GM10248 (cell line): ENCODE measurements at regions of chr12 and their contacts with region 1.

Region 1: GRCh38 chr12:101839324-101840283 is 8.8 kb upstream of the GNPTAB start:
- DNase-seq: peak; percentile 56
- CTCF ChIP-seq: peak; percentile 78

Region 2: DNA sequence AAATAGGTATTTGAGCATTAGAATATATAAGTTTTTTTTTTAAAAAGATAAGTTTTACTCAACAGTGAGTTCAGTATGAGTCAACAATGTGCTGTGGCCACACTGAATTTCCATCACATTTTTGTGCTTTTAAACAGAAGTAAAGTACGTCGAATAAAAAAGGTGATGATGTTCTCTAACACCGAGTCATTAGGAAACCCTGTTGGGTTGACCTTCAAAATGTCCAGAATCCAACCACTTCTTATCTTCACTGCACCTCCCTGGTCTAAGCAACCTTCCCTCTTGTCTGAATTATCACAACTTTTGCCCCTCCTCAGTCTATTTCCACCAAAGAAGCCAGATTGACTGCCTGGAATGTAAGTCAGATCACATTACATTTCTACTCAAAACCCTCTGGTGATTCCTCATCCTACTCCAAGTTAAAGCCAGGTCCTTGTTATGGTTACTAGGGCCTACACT is 57.3 kb before region 1 on chr12:
- CTCF ChIA-PET with region 1: interaction called, 28 read pairs
- POLR2A ChIA-PET with region 1: no interaction called
- DNase-seq: no peak
- CTCF ChIP-seq: no peak

Region 3: GRCh38 chr12:101857043-101857558 is 17.5 kb after region 1 on chr12:
- CTCF ChIA-PET with region 1: interaction called, 103 read pairs
- POLR2A ChIA-PET with region 1: interaction called, 5 read pairs
- DNase-seq: peak; percentile 20
- CTCF ChIP-seq: no peak

Region 4: GRCh38 chr12:101863981-101864380 is 24.4 kb after region 1 on chr12:
- CTCF ChIA-PET with region 1: interaction called, 14 read pairs
- POLR2A ChIA-PET with region 1: no interaction called
- DNase-seq: no peak
- CTCF ChIP-seq: no peak

Region 5: GRCh38 chr12:102061096-102061559 is 221.5 kb after region 1 on chr12:
- CTCF ChIA-PET with region 1: no interaction called
- POLR2A ChIA-PET with region 1: no interaction called
- DNase-seq: peak; percentile 47
- CTCF ChIP-seq: no peak